ENCODE measurements at regions of chr7 and their contacts with region 1.

Region 1: DNA sequence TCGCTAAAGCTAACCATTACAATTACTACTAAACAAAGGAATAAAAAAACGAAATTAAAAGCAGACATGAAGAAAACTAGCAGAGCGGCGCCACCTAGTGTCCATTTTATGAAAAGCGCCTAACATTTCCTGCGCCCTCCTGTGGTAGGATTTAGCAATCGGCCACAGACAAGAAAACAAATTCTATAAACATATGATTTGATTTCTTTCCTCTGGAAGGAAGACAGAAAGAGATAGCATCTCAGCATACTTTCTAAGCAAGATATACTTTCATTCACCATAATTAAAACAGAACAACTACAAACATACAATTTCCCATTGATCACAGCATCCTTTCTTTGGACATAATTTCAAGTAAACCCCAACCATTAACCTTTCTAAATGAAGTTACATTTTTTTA is 337.7 kb upstream of the NPVF start:
- DNase-seq: peak; percentile 42 to 69 (median 63)
- H3K4me3 ChIP-seq: no peak overlapping the region
- H3K4me3 Mint-ChIP-seq: peak overlapping the region in 4 of 8 donors; percentile 21 to 69 (median 42)
- H3K27ac ChIP-seq: no peak overlapping the region
- H3K27ac Mint-ChIP-seq: no peak overlapping the region
- H3K4me1 ChIP-seq: no peaks in the 10 kb centered on the region
- H3K4me1 Mint-ChIP-seq: peaks cover 1 to 7% (median 4%) of the 10 kb centered on the region in 4 donors
- H3K27me3 ChIP-seq: no peaks in the 10 kb centered on the region
- H3K27me3 Mint-ChIP-seq: peaks cover 0 to 3% of the 10 kb centered on the region in 2 donors

Region 2: DNA sequence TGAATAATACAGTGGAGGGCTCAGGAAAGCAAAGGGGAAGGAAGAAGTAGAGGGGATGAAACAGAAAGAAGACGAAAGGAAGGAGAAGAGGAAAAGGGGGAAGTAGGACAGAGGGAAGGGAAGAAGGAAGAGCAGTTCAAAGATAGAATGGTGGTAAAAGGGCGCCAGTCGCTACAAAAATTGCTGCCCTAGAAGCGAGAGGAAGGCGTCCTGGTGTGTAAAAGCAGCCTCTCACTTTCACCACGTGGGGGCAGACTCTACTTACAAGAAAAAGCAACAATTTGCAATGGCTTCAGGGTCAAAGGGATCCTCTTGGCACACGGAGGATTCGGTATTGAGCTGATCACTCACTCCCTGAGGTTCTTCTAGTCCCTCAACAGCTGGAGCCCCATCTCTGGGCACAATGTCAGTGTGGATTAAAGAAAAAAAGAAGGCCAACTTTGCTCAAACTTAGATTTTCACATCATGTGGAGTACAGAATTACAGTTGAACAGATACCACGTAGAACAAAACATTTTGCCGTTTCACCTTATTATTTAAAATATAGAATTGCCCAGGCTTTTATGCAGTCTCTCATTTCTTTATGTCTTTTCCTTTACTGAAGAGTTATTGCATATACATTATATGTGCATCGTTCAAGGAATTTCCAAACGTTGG is 306.2 kb before region 1 on chr7:
- CTCF ChIA-PET with region 1: interaction called, 195 read pairs
- POLR2A ChIA-PET with region 1: interaction called, 3 read pairs
- intact Hi-C with region 1: loop called (anchors 1 kb)
- DNase-seq: peak; percentile 61 to 71 (median 66)
- H3K4me3 ChIP-seq: no peak overlapping the region
- H3K4me3 Mint-ChIP-seq: peak overlapping the region in 6 of 8 donors; percentile 46 to 77 (median 55)
- H3K27ac ChIP-seq: no peak overlapping the region
- H3K27ac Mint-ChIP-seq: peak overlapping the region in 4 of 7 donors; percentile 34 to 57 (median 53)
- H3K4me1 ChIP-seq: peaks cover 25% of the 10 kb centered on the region
- H3K4me1 Mint-ChIP-seq: peaks cover 18 to 29% (median 23%) of the 10 kb centered on the region in 4 donors
- H3K27me3 ChIP-seq: no peaks in the 10 kb centered on the region
- H3K27me3 Mint-ChIP-seq: peaks cover 4 to 14% of the 10 kb centered on the region in 2 donors

Region 3: DNA sequence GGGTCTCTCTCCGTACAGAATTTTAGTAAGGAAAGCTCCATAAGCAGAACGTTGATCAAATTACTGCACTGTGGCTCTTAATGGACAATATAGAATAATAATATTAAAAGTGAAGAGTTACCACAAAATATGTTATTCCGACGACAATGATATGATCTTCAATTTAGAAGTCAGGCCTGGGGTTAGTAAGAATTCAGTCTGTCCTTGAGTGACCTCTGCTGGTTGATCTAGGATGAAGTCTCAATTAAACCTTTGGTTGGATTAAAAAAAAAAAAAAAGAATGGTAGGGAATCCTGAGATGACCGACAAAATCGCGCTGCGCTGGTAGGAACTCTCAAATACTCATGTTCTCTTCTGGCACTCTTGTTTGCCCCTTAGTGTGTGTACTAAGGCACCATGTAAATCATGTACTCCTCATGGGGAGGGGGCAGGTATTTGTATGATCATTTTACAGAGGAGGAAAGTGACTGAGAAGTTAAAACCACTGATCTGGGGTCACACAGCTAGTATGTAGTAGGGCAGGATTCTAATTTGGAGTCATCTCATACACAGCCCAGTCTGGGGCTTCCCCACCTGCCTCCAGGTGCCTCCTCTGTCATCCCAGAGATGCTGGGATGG is 176.4 kb before region 1 on chr7:
- CTCF ChIA-PET with region 1: interaction called, 5 read pairs
- POLR2A ChIA-PET with region 1: no interaction called
- intact Hi-C with region 1: loop called (anchors 1 kb)
- DNase-seq: peak in 4 of 5 donors; percentile 7 to 19 (median 12)
- H3K4me3 ChIP-seq: no peak overlapping the region
- H3K4me3 Mint-ChIP-seq: no peak overlapping the region
- H3K27ac ChIP-seq: no peak overlapping the region
- H3K27ac Mint-ChIP-seq: no peak overlapping the region
- H3K4me1 ChIP-seq: no peaks in the 10 kb centered on the region
- H3K4me1 Mint-ChIP-seq: no peaks in the 10 kb centered on the region
- H3K27me3 ChIP-seq: no peaks in the 10 kb centered on the region
- H3K27me3 Mint-ChIP-seq: peaks cover 4 to 5% of the 10 kb centered on the region in 2 donors

Region 4: DNA sequence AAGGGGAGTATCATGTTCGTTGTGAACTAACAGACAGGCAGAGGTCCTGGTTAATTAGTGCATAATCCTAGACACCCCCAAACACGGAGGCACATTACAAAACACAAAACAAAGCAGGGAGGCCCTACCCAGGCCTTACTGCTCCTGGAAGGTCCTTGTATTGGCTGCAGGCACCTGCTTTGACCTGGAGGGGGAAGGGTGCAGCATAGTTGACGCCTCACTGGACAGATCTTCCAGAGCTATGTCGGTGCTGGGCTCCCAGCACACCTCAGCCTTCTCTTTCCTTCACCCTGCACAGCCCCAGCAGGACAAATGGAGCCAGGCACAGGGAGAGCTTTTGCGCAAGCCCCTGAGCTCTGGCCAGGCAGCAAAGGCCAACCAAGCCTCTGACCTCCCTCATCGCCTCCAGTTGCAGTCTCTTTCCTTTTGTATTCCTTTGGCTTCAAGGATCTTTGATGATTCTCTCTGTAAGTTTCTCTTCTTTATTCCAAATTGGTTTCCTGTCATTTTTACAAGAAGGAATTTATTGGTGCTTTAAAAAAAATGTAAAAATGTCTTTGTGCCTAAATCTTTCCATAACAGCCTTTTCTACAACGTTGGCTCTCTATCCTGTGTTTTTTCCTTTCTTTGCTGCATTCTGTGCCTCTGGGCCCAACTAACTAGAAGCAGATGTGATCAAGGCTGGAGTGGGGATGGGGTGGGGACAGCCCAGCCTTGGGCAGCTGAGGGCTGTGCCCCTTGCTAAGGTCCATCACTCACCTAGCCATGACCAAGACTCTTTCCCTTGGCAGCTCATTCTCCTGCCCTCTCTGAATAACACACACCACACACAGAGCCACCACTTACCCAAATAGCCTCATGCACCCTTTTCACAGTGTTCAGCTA is 20.6 kb before region 1 on chr7:
- CTCF ChIA-PET with region 1: interaction called, 15 read pairs
- POLR2A ChIA-PET with region 1: no interaction called
- intact Hi-C with region 1: no loop called
- DNase-seq: no peak
- H3K4me3 ChIP-seq: no peak overlapping the region
- H3K4me3 Mint-ChIP-seq: no peak overlapping the region
- H3K27ac ChIP-seq: no peak overlapping the region
- H3K27ac Mint-ChIP-seq: peak overlapping the region in 1 of 7 donors; percentile 48
- H3K4me1 ChIP-seq: no peaks in the 10 kb centered on the region
- H3K4me1 Mint-ChIP-seq: no peaks in the 10 kb centered on the region
- H3K27me3 ChIP-seq: peaks cover 3% of the 10 kb centered on the region
- H3K27me3 Mint-ChIP-seq: peaks cover 13 to 22% of the 10 kb centered on the region in 2 donors

Region 5: GRCh38 chr7:25578991-25579777 is 13.2 kb after region 1 on chr7:
- CTCF ChIA-PET with region 1: interaction called, 21 read pairs
- POLR2A ChIA-PET with region 1: no interaction called
- intact Hi-C with region 1: no loop called
- DNase-seq: no peak
- H3K4me3 ChIP-seq: no peak overlapping the region
- H3K4me3 Mint-ChIP-seq: no peak overlapping the region
- H3K27ac ChIP-seq: no peak overlapping the region
- H3K27ac Mint-ChIP-seq: no peak overlapping the region
- H3K4me1 ChIP-seq: no peaks in the 10 kb centered on the region
- H3K4me1 Mint-ChIP-seq: no peaks in the 10 kb centered on the region
- H3K27me3 ChIP-seq: peaks cover 5% of the 10 kb centered on the region
- H3K27me3 Mint-ChIP-seq: peaks cover 6 to 9% of the 10 kb centered on the region in 2 donors

Region 6: GRCh38 chr7:25777969-25778708 is 212.2 kb after region 1 on chr7:
- CTCF ChIA-PET with region 1: no interaction called
- POLR2A ChIA-PET with region 1: no interaction called
- intact Hi-C with region 1: no loop called
- DNase-seq: no peak
- H3K4me3 ChIP-seq: no peak overlapping the region
- H3K4me3 Mint-ChIP-seq: no peak overlapping the region
- H3K27ac ChIP-seq: no peak overlapping the region
- H3K27ac Mint-ChIP-seq: no peak overlapping the region
- H3K4me1 ChIP-seq: no peaks in the 10 kb centered on the region
- H3K4me1 Mint-ChIP-seq: no peaks in the 10 kb centered on the region
- H3K27me3 ChIP-seq: no peaks in the 10 kb centered on the region
- H3K27me3 Mint-ChIP-seq: peaks cover 2 to 5% of the 10 kb centered on the region in 2 donors

Region 7: DNA sequence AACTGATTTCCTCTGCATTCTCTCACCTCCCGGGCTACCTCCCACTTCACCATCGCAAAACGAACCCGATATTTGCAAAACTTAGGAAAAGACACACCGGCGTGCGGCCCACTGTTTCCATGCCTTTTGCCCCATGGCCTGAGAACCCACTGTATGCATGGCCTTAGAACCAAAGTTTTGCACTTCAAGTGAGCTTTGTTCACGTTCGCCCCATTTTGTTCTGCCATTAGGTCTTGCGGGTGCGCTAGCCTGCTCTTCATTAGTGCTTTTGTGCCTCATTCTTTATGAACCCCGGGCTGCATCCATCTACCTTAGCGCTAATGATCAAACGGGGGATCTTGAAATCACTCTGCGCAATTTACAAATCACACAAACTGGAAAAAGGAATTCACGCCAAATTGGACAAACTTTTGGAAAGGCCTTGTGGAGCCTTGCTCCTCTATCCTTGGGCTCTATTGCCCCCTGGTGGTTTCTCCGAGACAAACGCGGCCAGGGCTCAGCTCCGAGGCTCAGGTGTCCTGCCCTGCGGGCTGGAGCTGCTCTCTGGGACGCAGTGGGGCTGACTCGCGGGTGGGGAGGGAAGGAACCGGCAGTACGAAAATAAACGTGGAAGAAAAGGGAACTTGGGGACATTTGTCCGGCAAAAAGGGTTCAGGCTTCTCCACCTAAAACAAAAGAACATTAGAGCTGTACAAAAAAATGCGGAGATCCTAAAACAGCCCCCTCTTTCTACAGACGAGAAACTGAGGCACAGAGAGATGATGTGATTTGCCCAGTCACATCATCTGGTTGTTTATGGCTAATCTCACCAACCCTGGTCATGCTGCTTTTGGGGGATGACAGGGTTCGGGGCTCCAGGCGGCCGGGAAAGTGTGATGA is 285.6 kb after region 1 on chr7:
- CTCF ChIA-PET with region 1: no interaction called
- POLR2A ChIA-PET with region 1: no interaction called
- intact Hi-C with region 1: loop called (anchors 10 kb)
- DNase-seq: peak; percentile 39 to 55 (median 45)
- H3K4me3 ChIP-seq: no peak overlapping the region
- H3K4me3 Mint-ChIP-seq: peak overlapping the region; percentile 6 to 91 (median 78)
- H3K27ac ChIP-seq: no peak overlapping the region
- H3K27ac Mint-ChIP-seq: peak overlapping the region in 5 of 7 donors; percentile 58 to 91 (median 89)
- H3K4me1 ChIP-seq: peaks cover 20% of the 10 kb centered on the region
- H3K4me1 Mint-ChIP-seq: peaks cover 5 to 30% (median 11%) of the 10 kb centered on the region in 4 donors
- H3K27me3 ChIP-seq: peaks cover 59% of the 10 kb centered on the region
- H3K27me3 Mint-ChIP-seq: peaks cover 49 to 53% of the 10 kb centered on the region in 2 donors

Measured in CD4-positive, alpha-beta memory T cell (primary cell).